Common myeloid progenitor, CD34-positive (primary cell): ENCODE measurements at regions of chr5 and their contacts with region 1.

Region 1: DNA sequence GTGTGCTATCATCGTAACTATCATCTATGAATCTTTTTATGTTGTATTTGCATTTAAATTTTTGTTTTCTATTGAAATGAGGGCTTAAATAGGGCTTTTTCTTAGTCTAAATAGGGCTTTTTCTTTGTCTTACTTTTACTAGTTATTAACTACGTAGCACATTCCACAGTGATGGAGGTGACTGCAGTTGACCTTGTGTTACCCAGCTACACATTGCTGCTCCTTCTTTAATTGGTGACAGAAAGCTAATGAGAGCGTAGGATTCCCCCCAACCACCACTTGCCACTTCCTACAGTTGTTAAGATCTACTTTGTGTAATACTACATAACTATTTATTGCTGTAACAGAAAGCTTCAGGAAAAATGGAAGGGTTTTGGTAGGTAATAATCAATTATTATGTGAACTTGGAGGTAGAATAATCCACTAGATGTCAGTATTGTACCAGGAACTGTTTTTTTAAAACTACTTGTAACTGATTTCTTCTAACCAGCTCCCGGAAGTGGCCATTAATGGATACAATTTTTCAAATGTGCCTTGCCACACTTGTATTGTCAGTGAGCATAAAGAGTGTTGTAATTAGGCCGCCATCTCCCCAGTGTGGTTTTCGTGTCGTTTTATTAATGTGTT is 18.0 kb downstream of the MTRR start:
- DNase-seq: peak; percentile 34 to 61 (median 54)
- H3K4me3 ChIP-seq: no peak overlapping the region
- H3K27ac ChIP-seq: no peak overlapping the region
- H3K4me1 ChIP-seq: no peaks in the 10 kb centered on the region
- H3K27me3 ChIP-seq: no peaks in the 10 kb centered on the region

Region 2: GRCh38 chr5:7876867-7877266 is 10.1 kb before region 1 on chr5:
- CTCF ChIA-PET with region 1: interaction called, 37 read pairs
- POLR2A ChIA-PET with region 1: interaction called, 3 read pairs
- DNase-seq: no peak
- H3K4me3 ChIP-seq: no peak overlapping the region
- H3K27ac ChIP-seq: no peak overlapping the region
- H3K4me1 ChIP-seq: no peaks in the 10 kb centered on the region
- H3K27me3 ChIP-seq: no peaks in the 10 kb centered on the region

Region 3: GRCh38 chr5:7902201-7902600 is 15.2 kb after region 1 on chr5:
- CTCF ChIA-PET with region 1: interaction called, 10 read pairs
- POLR2A ChIA-PET with region 1: interaction called, 3 read pairs
- DNase-seq: no peak
- H3K4me3 ChIP-seq: no peak overlapping the region
- H3K27ac ChIP-seq: no peak overlapping the region
- H3K4me1 ChIP-seq: no peaks in the 10 kb centered on the region
- H3K27me3 ChIP-seq: no peaks in the 10 kb centered on the region

Region 4: DNA sequence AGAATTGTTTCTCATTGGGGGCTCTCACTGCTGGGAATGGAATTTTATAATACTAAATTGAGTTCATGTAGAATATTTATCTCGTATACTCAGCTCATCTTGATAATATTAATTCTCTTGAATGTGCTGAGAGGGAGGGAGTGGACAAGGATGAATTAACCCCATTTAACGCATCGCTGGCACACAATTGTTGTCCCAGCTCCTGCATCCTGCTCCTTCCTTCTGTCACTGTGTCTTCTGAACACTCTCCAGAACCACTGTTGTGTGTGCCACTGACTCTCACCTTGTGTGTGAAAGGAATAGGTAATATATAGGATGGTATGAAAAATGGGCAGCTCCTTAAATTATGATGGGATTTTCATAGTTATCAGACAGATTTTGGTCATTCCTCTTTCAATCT is 249.3 kb after region 1 on chr5:
- CTCF ChIA-PET with region 1: no interaction called
- POLR2A ChIA-PET with region 1: no interaction called
- DNase-seq: no peak
- H3K4me3 ChIP-seq: no peak overlapping the region
- H3K27ac ChIP-seq: no peak overlapping the region
- H3K4me1 ChIP-seq: peaks cover 0 to 5% (median 0%) of the 10 kb centered on the region in 4 experiments
- H3K27me3 ChIP-seq: no peaks in the 10 kb centered on the region